Activated CD8-positive, alpha-beta T cell treated with anti-CD3 and anti-CD28 coated beads, Interleukin-2, amount 10 ng/mL, durations not matched to agents 7 days and 5 days (primary cell): ENCODE measurements at regions of chr13 and their contacts with region 1.

Region 1: DNA sequence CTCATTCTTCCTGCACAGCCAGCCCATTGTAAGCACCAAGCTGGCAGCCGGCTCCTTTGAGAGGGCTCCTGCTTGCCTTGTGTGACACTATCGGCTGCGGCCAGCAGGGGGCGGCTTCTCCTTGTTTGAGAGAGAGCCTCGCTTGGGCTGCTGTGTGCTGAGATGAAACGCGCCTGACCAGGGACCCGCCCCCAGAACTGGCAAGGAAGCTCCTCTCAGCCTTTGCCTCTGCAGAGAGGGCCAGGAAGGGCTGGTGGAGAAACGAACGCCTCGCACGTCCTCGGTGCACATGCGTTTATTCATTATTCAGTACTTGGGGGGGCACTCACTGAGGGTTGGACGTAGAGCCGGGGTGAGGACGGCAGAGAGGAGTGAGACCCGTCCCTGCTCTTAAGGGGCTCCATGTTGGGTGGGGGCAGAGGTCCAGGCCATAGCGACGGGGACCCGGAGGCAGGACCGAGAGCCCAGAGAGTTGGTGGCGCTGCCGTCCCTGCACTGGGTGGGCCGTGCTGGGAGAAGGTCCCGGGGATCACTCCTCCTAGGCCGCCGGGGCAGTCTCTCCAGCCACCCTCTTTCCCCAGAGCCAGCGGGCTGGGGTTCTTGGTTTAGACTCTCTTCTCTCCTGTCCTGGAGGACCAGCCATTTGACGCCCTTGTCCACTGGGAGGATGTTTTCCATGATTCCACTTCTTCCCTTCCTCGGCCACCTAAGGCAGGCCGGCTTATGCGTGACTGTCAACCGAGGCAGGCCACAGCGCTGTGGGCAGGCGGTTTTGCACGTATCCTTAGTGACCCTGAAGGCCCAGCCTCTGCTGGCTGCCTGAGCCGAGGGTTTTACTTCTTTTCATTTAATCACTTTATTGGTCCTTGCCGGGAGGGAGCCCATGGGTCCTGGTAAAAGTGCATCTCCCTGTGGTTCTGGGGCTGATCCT is 174.5 kb downstream of the KATNAL1 start:
- DNase-seq: peak; percentile 98
- ATAC-seq: peak; percentile 100
- H3K4me3 Mint-ChIP-seq: no peak overlapping the region
- H3K27ac Mint-ChIP-seq: peak overlapping the region; percentile 45
- H3K4me1 Mint-ChIP-seq: peaks cover 11% of the 10 kb centered on the region
- H3K27me3 Mint-ChIP-seq: peaks cover 3% of the 10 kb centered on the region

Region 2: DNA sequence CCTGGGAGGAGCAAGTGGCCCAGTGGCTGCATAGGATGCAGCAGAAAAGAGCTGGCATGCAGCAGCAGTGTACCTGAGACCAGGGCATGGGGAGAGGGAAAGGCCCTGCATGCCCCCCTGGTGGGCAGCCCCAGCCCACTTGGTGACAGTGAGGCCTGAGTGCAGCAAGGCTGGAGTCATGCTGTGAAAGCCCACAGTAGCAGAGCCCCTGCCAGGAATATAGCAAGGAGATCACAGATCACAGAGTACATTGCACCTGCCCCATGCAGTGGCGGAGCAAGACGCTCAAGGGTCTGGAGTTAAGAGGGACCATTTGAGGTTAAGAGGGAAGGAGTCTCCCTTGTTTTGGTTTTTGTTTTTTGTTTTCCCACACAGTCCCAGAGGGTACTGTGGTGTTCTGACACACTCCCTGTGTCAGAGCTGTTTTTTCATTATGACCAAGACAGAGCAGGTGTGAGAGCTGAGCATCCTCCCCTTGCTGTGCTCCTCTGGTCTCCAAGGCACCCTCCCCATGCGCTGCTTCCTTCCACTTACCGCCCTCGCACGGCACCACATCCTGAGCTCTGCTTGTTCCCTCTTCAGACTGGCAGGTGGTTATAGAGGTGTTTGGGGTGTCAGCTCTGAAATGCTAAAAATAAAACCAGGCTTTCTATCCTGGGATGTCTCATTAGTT is 197.4 kb before region 1 on chr13:
- CTCF ChIA-PET with region 1: interaction called, 13 read pairs
- POLR2A ChIA-PET with region 1: no interaction called
- DNase-seq: peak; percentile 90
- ATAC-seq: peak; percentile 95
- H3K4me3 Mint-ChIP-seq: peak overlapping the region; percentile 83
- H3K27ac Mint-ChIP-seq: peak overlapping the region; percentile 95
- H3K4me1 Mint-ChIP-seq: peaks cover 44% of the 10 kb centered on the region
- H3K27me3 Mint-ChIP-seq: peaks cover 1% of the 10 kb centered on the region

Region 3: GRCh38 chr13:30153545-30154441 is 20.9 kb after region 1 on chr13:
- CTCF ChIA-PET with region 1: interaction called, 171 read pairs
- POLR2A ChIA-PET with region 1: interaction called, 10 read pairs
- DNase-seq: no peak
- ATAC-seq: no peak
- H3K4me3 Mint-ChIP-seq: no peak overlapping the region
- H3K27ac Mint-ChIP-seq: no peak overlapping the region
- H3K4me1 Mint-ChIP-seq: peaks cover 46% of the 10 kb centered on the region
- H3K27me3 Mint-ChIP-seq: peaks cover 3% of the 10 kb centered on the region

Region 4: GRCh38 chr13:30306762-30307193 is 173.9 kb after region 1 on chr13:
- CTCF ChIA-PET with region 1: interaction called, 29 read pairs
- POLR2A ChIA-PET with region 1: interaction called, 7 read pairs
- DNase-seq: peak; percentile 94
- ATAC-seq: peak; percentile 92
- H3K4me3 Mint-ChIP-seq: peak overlapping the region; percentile 83
- H3K27ac Mint-ChIP-seq: peak overlapping the region; percentile 88
- H3K4me1 Mint-ChIP-seq: peaks cover 43% of the 10 kb centered on the region
- H3K27me3 Mint-ChIP-seq: no peaks in the 10 kb centered on the region

Region 5: DNA sequence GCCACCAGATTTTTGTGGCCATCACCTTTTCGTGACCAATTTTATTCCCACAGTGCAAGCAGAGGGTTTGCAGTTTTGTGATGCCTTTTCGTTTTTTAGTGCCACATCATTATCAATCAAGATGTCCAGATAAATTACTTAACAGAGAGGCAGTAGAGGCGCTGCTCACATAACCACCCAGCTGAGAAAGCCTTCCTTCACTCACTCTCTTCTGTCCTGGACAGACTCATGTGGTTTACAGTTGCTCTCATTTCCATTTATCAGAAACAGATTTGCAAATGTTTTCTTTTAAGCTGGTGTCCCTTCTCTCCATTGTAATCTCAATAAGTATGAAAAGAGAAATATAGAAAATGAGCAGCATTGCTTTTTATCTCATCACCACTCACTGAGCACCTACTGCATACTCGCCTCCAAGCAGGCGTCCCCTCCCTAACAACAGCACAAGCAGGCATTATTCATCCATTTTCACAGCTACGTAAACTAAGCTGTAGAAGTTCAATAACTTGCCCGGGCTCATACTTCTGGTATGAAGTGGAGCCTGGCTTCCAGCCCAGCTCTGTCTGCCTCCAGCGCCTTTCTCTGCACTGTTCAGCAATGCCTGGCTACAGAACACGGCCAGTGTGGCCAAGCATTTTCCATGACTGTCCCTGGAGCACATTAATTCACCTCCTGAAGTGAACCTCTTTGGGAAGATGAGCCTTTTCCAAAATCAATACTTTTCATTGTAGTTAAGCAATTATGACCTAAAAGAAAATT is 209.1 kb after region 1 on chr13:
- CTCF ChIA-PET with region 1: interaction called, 25 read pairs
- POLR2A ChIA-PET with region 1: no interaction called
- DNase-seq: no peak
- ATAC-seq: no peak
- H3K4me3 Mint-ChIP-seq: no peak overlapping the region
- H3K27ac Mint-ChIP-seq: no peak overlapping the region
- H3K4me1 Mint-ChIP-seq: peaks cover 21% of the 10 kb centered on the region
- H3K27me3 Mint-ChIP-seq: peaks cover 28% of the 10 kb centered on the region

Region 6: DNA sequence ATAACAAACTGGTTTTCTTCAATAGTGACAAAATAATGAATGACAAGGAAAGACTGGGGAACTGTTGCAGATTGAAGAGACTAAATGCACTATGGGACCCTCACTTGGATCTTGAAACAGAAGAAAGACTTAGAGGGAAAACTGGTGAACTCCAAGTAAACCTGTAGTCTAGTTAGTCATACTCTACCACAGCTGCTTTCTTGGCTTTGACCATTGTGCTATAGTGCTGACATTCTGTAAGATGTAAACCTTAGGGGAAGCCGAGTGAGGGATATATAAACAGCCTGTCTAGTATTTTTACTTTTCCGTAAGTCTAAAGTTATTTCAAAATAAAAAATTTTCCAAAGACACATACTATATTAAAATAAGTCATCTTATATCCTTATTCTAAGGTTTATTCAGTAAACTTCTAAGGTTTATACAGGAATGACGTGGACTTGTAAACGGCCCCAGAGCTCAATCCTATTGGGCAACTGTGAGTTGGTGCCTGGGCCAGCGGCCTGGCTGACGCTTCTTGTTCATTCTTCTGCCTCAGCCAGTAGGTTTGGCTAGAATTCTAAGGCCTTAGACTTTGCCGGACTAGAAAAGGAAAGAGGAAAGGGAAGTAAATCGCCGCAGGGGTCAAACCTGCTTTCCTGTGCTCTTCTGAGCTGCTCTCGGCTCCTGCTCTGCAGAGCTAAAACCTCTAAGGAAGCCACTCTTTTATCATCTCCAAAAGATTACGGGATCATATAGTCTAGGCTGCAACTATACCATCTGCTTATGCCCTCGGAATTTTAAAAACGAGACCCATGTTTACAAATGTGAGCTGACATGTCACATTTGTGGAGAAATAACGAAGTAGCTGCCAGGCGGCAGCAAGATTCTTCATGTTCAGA is 255.8 kb after region 1 on chr13:
- CTCF ChIA-PET with region 1: interaction called, 12 read pairs
- POLR2A ChIA-PET with region 1: no interaction called
- DNase-seq: no peak
- ATAC-seq: peak; percentile 35
- H3K4me3 Mint-ChIP-seq: peak overlapping the region; percentile 64
- H3K27ac Mint-ChIP-seq: peak overlapping the region; percentile 79
- H3K4me1 Mint-ChIP-seq: peaks cover 49% of the 10 kb centered on the region
- H3K27me3 Mint-ChIP-seq: no peaks in the 10 kb centered on the region

Region 7: DNA sequence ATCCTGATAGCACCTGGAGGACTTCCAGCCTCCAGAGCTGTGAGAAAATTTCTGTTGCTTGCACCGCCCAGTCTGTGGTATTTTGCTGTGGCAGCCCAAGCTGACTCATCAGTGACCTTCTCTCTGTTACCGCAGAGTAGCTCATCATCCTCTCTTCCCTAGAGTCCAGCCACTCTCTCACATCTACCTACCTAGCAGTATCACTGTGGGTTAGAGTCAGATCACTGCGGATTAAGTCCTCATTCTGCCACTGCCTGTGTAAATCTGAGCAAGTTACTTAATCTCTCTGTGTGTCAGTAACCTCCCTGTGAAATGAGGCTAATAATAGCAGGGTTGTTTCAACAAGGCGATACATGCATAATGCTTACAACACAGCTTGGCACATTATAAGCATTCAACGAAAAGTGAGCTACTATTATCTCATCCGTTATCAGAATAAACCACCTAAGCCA is 444.5 kb after region 1 on chr13:
- CTCF ChIA-PET with region 1: interaction called, 10 read pairs
- POLR2A ChIA-PET with region 1: no interaction called
- DNase-seq: peak; percentile 55
- ATAC-seq: peak; percentile 59
- H3K4me3 Mint-ChIP-seq: no peak overlapping the region
- H3K27ac Mint-ChIP-seq: no peak overlapping the region
- H3K4me1 Mint-ChIP-seq: peaks cover 28% of the 10 kb centered on the region
- H3K27me3 Mint-ChIP-seq: peaks cover 25% of the 10 kb centered on the region

Region 8: DNA sequence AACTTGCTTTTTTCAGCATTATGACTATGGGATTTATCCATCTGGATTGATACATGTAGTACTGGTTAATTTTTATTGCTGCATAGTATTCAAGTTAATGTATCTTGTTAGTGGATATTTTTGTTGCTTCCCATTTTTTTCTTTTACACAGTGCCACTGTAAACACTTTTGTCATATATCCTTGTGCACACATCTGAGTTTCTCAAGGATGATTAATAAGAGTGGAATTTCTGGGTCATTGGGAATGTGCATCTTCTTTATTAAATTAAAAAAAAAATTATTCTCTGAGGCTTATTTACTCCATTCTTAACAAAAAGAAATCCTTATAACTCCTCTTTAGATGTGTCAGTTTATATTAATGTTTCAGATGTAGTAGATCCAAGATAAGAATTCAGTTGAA is 1094.2 kb after region 1 on chr13:
- CTCF ChIA-PET with region 1: no interaction called
- POLR2A ChIA-PET with region 1: no interaction called
- DNase-seq: no peak
- ATAC-seq: no peak
- H3K4me3 Mint-ChIP-seq: no peak overlapping the region
- H3K27ac Mint-ChIP-seq: no peak overlapping the region
- H3K4me1 Mint-ChIP-seq: peaks cover 9% of the 10 kb centered on the region
- H3K27me3 Mint-ChIP-seq: no peaks in the 10 kb centered on the region